ENCODE measurements at regions of chr12 and their contacts with region 1.

Region 1: DNA sequence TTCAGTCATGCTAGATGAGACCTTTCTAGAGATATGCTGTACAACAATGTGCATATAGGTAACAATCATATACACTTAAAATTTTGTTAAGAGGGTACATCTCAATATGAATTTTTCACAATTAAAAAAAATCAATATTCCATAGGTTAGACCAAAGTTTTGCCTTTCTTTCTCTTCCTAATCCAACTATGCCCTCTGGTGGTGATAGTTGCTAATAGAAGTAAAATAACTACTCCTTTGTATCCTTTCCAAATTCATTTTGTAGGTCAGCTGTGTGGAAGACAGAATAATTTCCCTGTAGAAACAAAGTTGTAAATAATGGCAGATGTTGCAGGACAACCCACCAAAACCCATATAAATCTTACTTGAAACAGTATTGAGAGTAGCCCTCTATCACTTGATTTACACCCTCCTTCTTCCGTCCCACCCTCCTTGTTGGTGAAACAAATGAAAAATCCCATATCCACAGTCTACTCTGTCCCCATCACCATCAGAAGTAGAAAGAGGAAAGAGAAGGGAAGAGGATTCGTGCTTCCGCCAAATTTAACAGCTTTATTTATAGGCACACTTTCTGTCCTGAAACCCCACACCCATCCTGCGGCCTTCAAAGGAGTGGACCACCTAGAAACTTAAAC is 34.2 kb upstream of the KICS2 start:
- DNase-seq: no peak
- ATAC-seq: peak; percentile 64
- H3K4me3 ChIP-seq: no peak overlapping the region
- H3K27ac ChIP-seq: no peak overlapping the region
- H3K4me1 ChIP-seq: peaks cover 5% of the 10 kb centered on the region
- H3K27me3 ChIP-seq: no peaks in the 10 kb centered on the region
- CTCF ChIP-seq: peak; percentile 83

Region 2: GRCh38 chr12:63836936-63837335 is 419.3 kb before region 1 on chr12:
- intact Hi-C with region 1: loop called (anchors 5 kb)
- DNase-seq: no peak
- ATAC-seq: no peak
- H3K4me3 ChIP-seq: no peak overlapping the region
- H3K27ac ChIP-seq: no peak overlapping the region
- H3K4me1 ChIP-seq: no peaks in the 10 kb centered on the region
- H3K27me3 ChIP-seq: no peaks in the 10 kb centered on the region
- CTCF ChIP-seq: no peak

Measured in upper lobe of right lung (tissue), 1 donor.